ENCODE measurements at regions of chr15 and their contacts with region 1.

Region 1: DNA sequence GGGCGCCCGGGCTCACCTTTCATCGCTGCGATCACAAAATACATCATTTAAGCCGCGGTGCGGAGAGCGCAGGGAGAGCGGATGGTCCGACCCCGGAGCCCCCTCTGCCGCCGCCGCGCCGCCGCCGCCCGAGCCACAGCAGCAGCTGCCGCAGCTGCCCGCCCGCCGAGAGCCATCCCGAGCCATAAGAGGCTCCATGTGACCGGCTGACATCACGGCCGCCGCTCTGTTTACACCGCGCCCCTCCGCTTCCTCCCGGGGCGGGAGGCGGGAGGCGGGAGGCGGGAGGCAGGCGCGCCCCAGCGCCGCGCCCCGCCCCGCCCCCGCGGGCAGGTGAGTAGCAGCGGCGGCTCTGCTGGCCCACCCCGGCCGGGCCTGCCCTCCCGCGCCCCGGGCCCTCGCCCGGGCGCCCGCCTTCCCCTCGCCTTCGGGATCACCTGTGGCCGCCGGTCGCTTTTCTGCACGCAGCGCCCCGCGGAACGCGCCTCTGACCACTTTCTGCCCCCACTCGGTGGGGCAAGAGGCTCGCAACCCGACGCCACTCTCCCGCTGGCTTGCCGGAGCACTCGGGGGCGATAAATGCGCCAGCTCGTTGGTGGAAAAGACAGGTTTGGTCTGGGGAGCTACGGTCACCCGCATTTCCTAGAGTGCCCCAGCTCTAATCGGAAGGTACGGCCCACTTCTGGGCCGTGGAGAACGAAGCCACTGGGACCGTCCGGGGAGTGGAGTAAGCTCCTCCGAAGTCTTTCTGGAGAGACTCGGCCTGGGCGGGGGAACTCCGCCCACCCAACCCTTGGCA is 113.6 kb upstream of the ICE2 start:
- DNase-seq: peak; percentile 87
- ATAC-seq: peak; percentile 90
- H3K4me3 Mint-ChIP-seq: peak overlapping the region; percentile 87
- H3K27ac Mint-ChIP-seq: peak overlapping the region; percentile 84
- H3K4me1 Mint-ChIP-seq: peaks cover 45% of the 10 kb centered on the region
- H3K27me3 Mint-ChIP-seq: no peaks in the 10 kb centered on the region

Region 2: DNA sequence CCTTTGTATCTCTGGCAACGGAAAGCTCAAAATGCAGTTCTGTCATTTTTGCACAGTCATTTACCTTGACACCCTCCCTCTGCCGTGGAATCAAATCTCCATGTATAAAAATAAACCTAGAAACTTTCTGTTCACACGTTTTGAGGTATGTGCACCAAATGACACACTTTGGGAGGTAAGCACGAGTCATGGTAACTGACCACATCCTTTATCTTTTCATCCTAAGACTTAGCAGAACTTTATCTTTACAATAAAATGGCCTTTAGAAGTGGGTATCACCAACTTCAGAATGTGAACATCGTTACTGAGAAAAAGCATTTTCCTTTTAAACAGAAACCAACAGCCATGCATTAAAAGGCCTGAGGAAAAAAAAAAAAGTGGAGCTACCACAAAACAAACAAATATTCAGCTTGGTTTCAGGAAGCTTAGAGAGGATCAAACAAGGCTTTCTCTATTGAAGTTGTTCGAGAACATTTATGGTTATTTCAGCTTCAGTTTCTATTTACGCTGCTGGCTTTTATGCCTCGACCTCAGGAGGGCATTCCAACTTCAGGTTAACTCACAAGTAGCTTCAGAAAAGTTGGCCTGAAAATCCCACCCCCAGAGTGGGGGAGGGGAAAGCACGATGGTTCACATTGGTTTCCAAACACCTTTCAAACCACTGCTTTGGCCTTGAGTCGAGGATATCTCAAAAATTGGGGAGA is 57.4 kb after region 1 on chr15:
- POLR2A ChIA-PET with region 1: interaction called, 10 read pairs
- DNase-seq: no peak
- ATAC-seq: peak; percentile 85
- H3K4me3 Mint-ChIP-seq: peak overlapping the region; percentile 76
- H3K27ac Mint-ChIP-seq: peak overlapping the region; percentile 82
- H3K4me1 Mint-ChIP-seq: peaks cover 28% of the 10 kb centered on the region
- H3K27me3 Mint-ChIP-seq: peaks cover 6% of the 10 kb centered on the region

Measured in activated naive CD8-positive, alpha-beta T cell treated with anti-CD3 and anti-CD28 coated beads, Interleukin-2, amount 10 ng/mL, durations not matched to agents 7 days and 5 days (primary cell).